Gastrocnemius medialis (tissue), 4 donors: ENCODE measurements at regions of chr11 and their contacts with region 1.

Region 1: DNA sequence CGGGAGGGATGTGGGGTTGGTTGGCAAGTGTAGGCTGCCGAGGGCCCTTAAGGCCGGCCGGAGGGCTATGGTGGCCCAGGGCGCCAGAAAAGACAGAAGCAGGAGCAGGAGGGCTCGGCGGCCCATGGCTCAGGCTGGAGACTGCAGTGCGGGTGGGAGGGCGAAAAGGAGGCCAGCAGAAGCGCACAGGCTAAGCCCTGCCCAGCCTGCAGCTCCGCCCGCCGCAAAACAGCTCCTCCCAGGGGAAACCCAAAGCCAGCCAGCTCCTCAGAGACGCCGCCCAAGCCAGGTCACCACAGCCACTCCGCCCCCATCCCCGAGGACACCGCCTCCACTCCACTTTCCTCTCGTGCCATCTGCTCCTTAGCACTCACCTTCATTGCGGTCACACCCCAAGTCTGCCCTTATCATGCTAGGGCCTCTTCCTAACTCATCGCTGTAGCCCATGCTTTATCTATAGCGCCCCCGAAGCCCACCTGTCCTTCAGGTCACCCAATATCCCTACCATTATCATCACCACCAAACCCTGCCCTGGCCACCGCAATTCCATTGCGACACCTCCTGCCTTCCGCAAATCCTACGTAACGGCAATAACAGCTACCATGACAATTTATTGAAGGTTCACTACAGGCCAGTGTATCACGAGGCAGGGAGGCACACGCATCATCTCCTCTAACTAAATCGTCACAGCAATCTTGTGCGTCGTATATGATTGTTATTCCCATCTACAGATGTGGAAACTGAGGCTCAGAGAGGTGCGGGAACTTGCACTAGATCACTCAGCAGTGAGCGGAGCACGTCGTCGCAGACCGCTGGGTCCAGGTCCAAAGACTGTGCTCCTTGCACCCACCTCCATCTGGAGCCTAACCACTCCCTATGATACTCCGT is at the start of gene PRCP:
- DNase-seq: peak; percentile 93
- ATAC-seq: peak; percentile 73 to 80
- H3K4me3 ChIP-seq: peak within 1 kb of the TSS; percentile 66 to 94 (median 82)
- H3K27ac ChIP-seq: peak within 1 kb of the TSS; percentile 90 to 96 (median 94)
- H3K4me1 ChIP-seq: peaks cover 21 to 32% of the 10 kb centered on the region in 2 donors
- H3K27me3 ChIP-seq: no peaks in the 10 kb centered on the region
- CTCF ChIP-seq: peak in 1 of 5 experiments; percentile 15
- POLR2A ChIP-seq: peak; percentile 64 to 74
- total RNA-seq, gene PRCP: 7.1 to 17.8 (median 9.5) TPM

Region 2: GRCh38 chr11:82867495-82868082 is 32.9 kb before region 1 on chr11:
- in situ Hi-C with region 1: no loop called
- intact Hi-C with region 1: loop called (anchors 1 kb)
- DNase-seq: peak; percentile 45 to 58
- ATAC-seq: peak in 1 of 2 donors; percentile 53
- H3K4me3 ChIP-seq: peak overlapping the region in 3 of 4 donors; percentile 3 to 35 (median 21)
- H3K27ac ChIP-seq: no peak overlapping the region
- H3K4me1 ChIP-seq: peaks cover 5 to 26% of the 10 kb centered on the region in 2 donors
- H3K27me3 ChIP-seq: no peaks in the 10 kb centered on the region
- CTCF ChIP-seq: peak; percentile 47 to 79 (median 69)
- POLR2A ChIP-seq: no peak

Region 3: DNA sequence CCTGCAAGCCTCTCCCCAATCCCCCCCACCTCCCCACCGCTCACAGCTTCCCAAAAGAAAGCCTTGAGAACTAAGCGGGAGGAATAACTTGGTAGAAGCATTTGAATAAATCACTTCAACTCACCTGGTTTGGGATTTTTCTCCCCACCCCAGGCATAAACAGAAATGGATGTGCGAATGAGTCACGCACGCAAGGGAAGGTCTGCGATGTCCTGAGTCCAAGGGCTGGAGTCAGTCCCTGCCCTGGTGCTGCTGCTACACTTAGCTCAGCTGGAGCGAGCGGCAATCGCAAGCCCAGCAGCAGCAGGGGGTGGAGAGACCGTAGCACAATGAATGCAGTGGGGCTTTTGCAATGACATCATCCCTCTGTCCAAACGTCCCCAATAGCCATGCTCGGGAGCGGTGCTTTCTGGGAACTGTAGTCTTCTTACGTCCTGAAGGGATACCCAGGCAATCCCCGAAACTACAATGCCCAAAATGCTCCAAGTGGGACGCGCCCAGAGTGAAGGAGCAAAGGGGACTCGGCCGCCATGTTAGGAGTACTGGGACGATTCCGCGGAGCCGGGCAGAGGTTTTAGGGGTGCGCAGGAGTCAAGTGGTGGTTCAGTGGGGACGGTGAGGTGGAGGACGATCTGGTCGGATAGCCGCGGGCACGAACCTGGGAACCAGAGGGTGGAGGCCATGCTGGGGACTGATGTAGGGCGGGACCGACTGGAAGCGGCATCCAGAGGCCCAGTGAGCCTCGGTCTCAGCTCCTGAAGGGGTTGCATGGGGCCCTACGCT is 171.2 kb after region 1 on chr11 and contains the start of gene RAB30:
- in situ Hi-C with region 1: loop called in 2 of 4 experiments (anchors 10 to 25 kb)
- intact Hi-C with region 1: loop called (anchors 10 kb)
- DNase-seq: peak; percentile 99
- ATAC-seq: peak; percentile 95 to 97
- H3K4me3 ChIP-seq: peak within 1 kb of the TSS; percentile 73 to 90 (median 83)
- H3K27ac ChIP-seq: peak within 1 kb of the TSS; percentile 87 to 98 (median 96)
- H3K4me1 ChIP-seq: peaks cover 42 to 54% of the 10 kb centered on the region in 2 donors
- H3K27me3 ChIP-seq: no peaks in the 10 kb centered on the region
- CTCF ChIP-seq: no peak
- POLR2A ChIP-seq: peak; percentile 91 to 94
- total RNA-seq, gene RAB30: 29.8 to 57.1 (median 33.9) TPM

Region 4: DNA sequence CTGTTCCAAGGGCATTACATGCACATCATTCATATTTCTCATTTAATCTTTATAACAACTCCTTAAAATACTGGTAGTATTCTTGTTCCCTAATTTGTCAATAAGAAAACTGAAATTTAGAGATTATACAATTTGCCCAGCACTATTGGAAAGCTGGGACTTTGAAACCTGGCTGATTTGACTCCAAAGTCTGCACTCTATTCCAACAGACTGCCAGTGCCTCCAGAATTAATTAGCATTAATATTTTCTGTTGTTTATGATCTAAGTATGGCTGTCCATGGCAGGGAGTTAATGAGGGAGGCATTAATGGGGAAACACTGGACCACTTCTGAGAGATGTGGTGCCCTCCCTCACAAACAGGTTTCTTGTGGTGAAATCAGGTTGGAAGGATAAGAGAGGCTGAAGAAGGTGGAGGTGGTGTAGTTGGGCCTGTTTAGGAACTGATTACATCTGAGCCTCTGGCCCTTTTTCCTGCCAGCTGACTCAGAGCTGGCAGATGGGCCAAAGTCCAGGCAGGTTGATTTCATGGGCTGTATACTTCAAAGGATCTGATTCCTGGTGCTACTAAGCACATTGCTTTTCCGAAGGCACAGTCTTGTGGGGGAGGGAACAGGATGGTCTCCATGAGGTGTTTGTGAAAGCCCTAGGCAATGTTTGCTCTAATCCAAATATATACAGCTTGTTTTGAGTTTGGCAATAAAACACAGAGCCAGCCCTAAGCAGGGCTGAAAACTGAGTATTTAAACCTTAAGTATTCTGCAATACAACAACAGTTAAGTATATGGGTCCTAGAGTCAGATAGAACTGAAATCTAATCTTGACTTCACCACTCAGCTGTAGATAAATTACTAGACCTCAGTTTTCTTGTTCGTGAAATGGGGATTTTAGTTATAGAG is 192.2 kb after region 1 on chr11:
- in situ Hi-C with region 1: loop called in 1 of 4 experiments (anchors 25 kb)
- intact Hi-C with region 1: loop called (anchors 1 kb)
- DNase-seq: peak; percentile 59 to 69
- ATAC-seq: peak; percentile 96 to 97
- H3K4me3 ChIP-seq: no peak overlapping the region
- H3K27ac ChIP-seq: peak overlapping the region; percentile 36 to 79 (median 64)
- H3K4me1 ChIP-seq: peaks cover 16 to 19% of the 10 kb centered on the region in 2 donors
- H3K27me3 ChIP-seq: no peaks in the 10 kb centered on the region
- CTCF ChIP-seq: no peak
- POLR2A ChIP-seq: no peak

Region 5: DNA sequence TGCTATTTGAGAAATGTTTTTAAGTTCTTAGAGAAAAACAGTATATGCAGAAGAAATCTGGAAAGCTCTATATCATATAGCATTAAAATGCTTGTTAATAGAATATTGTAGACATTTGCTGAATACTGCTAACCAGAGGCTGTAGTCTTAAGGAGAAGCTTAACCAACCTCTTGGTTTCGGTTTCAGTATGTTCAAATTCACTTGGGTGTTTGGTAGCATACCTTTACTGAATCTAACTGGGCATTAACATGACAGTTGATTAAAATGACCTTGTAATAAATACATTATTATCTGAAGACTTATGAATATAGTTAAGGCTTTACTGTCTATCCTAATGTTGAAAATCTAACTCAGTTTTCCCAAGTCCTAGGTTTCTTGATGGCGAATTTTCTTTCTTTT is 261.9 kb after region 1 on chr11:
- in situ Hi-C with region 1: no loop called
- intact Hi-C with region 1: loop called (anchors 2 kb)
- DNase-seq: no peak
- ATAC-seq: no peak
- H3K4me3 ChIP-seq: peak overlapping the region in 1 of 4 donors; percentile 92
- H3K27ac ChIP-seq: peak overlapping the region; percentile 39 to 100 (median 99)
- H3K4me1 ChIP-seq: peaks cover 38 to 44% of the 10 kb centered on the region in 2 donors
- H3K27me3 ChIP-seq: no peaks in the 10 kb centered on the region
- CTCF ChIP-seq: no peak
- POLR2A ChIP-seq: no peak

Region 6: GRCh38 chr11:83241291-83241946 is 340.9 kb after region 1 on chr11:
- in situ Hi-C with region 1: loop called in 1 of 4 experiments (anchors 25 kb)
- intact Hi-C with region 1: no loop called
- DNase-seq: peak in 1 of 2 donors; percentile 18
- ATAC-seq: peak; percentile 54 to 78
- H3K4me3 ChIP-seq: no peak overlapping the region
- H3K27ac ChIP-seq: no peak overlapping the region
- H3K4me1 ChIP-seq: no peaks in the 10 kb centered on the region
- H3K27me3 ChIP-seq: no peaks in the 10 kb centered on the region
- CTCF ChIP-seq: peak in 3 of 5 experiments; percentile 14 to 43 (median 41)
- POLR2A ChIP-seq: no peak

Region 7: DNA sequence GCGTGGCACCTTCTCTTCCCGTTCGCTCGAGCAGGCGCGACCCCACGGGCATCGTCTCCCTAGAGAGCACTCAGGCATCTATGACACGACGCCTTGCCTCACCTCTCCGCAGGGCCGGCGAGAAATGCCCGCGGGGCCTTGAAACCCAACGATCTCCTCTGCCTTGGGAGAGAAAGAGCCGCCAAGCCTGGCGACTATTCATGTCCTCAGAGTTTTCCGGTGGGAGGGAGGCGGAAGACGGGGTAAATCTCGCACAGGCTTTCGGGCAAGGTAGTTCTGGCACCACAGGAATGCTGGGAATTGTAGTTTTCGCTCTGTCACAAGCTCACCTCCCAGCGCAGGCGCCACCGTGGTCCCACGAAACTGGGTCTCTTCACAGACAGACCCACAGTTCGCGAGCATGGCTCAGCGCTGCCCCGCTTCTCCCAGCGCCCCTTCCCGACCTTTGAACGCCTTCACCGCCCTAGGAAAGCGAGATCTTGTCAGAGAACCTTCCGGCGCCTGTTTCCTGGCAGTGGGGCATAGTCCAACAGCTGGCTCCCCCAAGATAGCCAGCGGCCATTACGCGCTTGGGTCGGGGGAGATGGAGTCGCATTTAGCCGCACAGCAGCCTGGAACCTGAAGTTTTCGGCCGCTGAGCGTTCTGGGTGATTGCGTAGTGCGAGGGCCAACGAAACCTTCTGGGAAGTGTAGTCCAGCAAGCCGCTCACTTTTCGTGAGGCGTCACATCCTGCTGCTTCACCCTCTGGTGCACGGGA is 385.4 kb after region 1 on chr11 and contains the start of gene CCDC90B:
- in situ Hi-C with region 1: no loop called
- intact Hi-C with region 1: loop called (anchors 1 kb)
- DNase-seq: peak; percentile 96 to 97
- ATAC-seq: peak; percentile 97 to 98
- H3K4me3 ChIP-seq: peak within 1 kb of the TSS; percentile 80 to 94 (median 90)
- H3K27ac ChIP-seq: peak within 1 kb of the TSS; percentile 95 to 98 (median 97)
- H3K4me1 ChIP-seq: peaks cover 36 to 37% of the 10 kb centered on the region in 2 donors
- H3K27me3 ChIP-seq: no peaks in the 10 kb centered on the region
- CTCF ChIP-seq: peak in 1 of 5 experiments; percentile 7
- POLR2A ChIP-seq: peak; percentile 83 to 88
- total RNA-seq, gene CCDC90B: 18.1 to 30.1 (median 22.8) TPM